ENCODE measurements at regions of chr2 and their contacts with region 1.

Region 1: GRCh38 chr2:203972066-203972465 is 35.5 kb downstream of the ICOS start:
- DNase-seq: no peak
- H3K4me3 Mint-ChIP-seq: no peak overlapping the region
- H3K27ac Mint-ChIP-seq: no peak overlapping the region
- H3K4me1 Mint-ChIP-seq: peaks cover 14% of the 10 kb centered on the region
- H3K27me3 Mint-ChIP-seq: no peaks in the 10 kb centered on the region

Region 2: DNA sequence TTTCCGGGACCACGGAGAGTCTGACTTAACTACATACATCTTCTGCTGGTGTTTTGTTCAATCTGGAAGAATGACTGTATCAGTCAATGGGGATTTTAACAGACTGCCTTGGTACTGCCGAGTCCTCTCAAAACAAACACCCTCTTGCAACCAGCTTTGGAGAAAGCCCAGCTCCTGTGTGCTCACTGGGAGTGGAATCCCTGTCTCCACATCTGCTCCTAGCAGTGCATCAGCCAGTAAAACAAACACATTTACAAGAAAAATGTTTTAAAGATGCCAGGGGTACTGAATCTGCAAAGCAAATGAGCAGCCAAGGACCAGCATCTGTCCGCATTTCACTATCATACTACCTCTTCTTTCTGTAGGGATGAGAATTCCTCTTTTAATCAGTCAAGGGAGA is 12.4 kb before region 1 on chr2:
- intact Hi-C with region 1: loop called (anchors 2 kb)
- DNase-seq: no peak
- H3K4me3 Mint-ChIP-seq: no peak overlapping the region
- H3K27ac Mint-ChIP-seq: peak overlapping the region; percentile 62
- H3K4me1 Mint-ChIP-seq: peaks cover 48% of the 10 kb centered on the region
- H3K27me3 Mint-ChIP-seq: no peaks in the 10 kb centered on the region